ENCODE measurements at regions of chr1 and their contacts with region 1.

Region 1: DNA sequence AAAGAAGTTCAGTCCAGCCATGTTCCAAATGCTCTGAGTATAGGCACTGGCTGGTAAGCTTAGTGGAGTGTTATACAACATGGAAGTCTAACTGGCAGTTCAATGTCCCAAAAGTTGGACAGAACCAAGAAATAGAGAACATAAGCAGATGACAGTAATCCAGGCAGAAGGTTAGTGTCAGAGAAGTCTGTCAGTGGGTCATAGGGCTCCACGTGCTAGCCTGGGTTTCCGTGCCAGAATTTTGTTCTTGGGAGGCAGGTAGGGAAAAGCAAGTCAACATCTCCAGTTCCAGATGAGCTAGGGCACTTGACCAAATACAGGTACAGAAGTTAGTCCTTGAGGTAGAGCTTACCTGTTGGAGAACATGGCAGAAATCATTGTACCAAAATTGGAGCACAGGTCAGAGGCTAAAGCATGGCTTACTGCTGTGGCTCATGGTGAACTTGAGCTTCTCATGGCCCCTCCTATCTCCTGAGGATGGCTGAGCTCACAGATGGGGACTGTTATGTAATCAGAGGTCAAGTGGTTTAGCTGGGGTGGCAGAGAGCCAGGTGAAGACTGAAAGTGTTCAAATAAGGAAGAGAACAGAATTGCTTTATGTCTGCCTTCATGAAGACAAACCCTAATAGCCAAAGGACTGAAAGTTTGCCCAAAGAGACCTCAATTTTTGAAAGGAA is 170.8 kb downstream of the NFIA start:
- DNase-seq: no peak

Region 2: GRCh38 chr1:61056573-61057439 is 196.4 kb before region 1 on chr1:
- intact Hi-C with region 1: no loop called
- DNase-seq: peak; percentile 79

Region 3: DNA sequence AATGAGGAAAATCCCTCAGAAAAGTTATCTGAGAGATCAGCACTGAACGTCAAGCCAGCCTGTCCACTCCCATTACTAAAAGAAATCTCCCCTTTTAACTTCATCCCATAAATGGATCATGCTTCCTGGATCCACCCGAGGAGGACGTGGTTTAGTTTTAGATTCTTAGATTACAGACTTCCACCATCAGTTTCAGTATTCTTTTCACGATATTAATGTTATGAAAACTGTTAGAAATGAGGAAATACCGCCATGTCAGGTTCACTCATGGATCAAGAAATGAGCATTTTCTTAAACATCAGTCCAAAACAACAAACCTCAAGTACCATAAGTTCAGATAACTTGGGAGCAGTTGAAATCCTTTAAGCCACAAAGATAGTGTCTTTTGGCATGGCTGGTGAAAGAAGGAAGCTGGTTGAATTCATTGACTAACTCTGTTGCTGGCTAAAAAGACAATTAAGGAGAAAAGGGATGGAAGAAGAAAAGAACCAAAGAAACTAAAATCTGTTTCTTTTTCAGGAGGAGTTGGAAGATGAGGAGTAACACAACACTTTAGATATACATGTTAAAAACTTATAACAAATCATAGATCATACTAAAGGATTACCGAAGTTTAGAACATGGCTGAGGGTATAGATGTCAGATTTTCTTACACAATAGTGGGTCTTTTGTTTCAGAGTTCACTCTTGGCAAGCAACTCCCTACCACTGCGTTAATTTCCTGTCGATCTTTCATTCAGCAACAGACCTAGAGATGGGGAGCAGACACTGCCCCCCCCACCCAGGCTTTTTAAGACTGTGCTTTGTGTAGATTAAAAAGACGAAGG is 120.8 kb before region 1 on chr1:
- intact Hi-C with region 1: loop called (anchors 5 kb)
- DNase-seq: no peak

Region 4: DNA sequence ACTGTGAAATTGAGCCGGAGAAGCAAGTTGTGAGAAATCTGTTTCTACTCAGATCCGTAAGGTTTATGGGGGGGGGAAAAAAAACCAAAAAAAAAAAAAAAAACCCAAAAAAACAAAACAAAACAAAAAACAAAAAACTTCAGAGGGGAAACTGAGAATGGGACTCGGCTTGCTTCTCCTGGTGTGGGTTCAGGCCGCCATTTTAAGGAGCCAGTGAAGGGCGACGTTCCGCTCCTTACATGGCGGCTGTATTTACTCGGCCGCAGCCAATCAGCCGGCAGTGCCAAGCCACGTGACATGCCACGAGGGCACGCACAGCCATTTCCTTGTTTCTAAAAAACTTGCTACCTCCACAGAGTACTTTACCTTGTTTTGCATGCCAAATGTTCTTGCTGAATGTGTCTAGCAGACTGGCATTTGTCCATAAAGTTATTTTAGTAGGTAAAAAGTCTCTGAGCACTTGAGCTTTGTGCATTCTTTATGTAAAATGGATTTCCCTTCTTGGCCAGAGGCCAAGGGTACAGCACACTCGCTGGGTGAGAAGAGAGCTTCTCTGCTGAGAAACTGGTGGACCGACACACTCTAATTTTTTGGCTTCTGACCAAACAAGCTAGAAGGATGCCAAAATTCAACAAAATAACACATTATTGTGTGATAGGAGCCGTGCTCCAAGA is 69.0 kb before region 1 on chr1:
- intact Hi-C with region 1: no loop called
- DNase-seq: peak; percentile 93

Region 5: DNA sequence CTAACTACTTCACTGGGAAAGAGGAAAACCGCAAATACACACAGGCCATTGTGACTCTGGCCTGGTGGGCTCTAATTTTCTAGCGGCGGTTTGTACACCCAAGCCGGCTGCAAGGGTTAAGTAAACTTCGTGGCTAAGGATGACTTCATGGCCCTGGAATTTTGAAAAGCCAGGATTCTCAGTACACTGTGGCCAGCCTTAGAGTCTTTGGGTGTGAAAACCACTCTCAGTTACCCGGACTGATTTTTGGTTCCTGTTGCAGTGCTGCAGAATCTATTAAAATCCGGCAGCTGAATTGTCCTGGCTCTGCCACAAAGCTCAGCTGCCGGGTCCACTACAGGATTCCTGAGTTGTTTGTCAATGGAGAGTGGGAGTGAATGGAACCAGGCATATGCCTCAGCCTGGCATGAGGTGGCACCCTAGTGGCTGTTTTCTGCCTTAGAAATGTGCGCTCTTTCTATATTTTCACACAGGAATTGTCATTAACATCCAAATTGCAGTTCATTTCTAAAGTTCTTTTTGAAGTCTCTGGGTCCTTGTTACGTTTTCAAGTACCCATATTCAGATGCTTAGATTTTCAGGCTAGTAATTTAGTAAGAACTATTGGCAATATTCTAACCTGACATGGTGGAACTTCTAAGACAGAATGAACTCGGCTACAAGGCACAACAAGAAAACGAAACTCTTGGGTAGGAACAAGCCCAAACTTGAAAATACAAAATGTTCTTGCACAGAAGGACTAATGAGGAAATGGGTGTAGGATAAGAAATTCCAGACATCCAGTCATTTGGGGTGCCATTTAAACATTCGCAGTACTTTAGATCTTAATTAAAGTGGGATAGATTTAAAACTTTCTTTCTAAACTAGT is 85.0 kb after region 1 on chr1:
- intact Hi-C with region 1: loop called (anchors 5 kb)
- DNase-seq: peak; percentile 80

Region 6: GRCh38 chr1:61434276-61434675 is 181.1 kb after region 1 on chr1:
- intact Hi-C with region 1: no loop called
- DNase-seq: no peak

Region 7: DNA sequence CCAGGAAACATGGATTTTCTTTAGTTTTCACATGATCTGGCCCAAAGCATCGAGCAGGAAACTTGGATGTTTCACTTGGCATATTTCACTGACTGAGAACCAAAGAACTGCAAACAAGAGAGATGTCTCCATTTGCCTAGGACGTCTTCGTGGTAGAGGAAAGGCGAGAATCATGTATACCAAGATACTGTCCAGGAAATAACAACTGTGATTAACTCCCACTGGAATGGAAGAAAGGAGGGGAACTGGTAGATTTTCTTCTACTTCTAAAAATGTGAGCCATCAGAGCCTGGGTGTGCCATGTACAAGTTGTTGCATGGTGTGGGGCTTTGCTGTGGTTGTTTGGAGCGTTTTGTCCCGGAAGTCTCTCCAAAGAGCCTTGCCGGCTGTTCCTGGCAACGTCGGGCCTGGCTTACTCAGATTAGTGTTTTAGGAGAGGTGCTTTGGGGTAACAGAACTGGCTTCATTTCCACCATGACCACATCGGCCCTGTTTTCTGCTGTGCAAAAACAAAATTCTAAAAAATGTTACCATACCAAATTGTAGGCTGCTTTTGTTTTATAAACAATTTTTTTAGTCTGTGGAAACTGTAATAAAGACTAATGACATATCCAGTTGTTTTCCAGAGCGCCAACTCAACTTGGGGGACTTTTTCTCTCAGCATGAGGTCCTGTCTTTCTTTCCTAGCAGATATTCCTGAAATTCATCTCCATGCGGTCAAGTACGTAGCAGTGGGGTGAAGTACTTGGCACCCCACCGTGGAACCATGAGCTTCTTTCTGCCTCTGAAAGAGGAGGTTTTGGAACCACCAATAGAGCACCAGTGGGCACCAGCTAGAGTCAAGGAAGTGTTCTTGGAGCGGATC is 353.5 kb after region 1 on chr1:
- intact Hi-C with region 1: no loop called
- DNase-seq: no peak

Measured in cardiac septum (tissue), 1 donor.